CD8-positive, alpha-beta T cell (primary cell): ENCODE measurements at regions of chr19 and their contacts with region 1.

Region 1: DNA sequence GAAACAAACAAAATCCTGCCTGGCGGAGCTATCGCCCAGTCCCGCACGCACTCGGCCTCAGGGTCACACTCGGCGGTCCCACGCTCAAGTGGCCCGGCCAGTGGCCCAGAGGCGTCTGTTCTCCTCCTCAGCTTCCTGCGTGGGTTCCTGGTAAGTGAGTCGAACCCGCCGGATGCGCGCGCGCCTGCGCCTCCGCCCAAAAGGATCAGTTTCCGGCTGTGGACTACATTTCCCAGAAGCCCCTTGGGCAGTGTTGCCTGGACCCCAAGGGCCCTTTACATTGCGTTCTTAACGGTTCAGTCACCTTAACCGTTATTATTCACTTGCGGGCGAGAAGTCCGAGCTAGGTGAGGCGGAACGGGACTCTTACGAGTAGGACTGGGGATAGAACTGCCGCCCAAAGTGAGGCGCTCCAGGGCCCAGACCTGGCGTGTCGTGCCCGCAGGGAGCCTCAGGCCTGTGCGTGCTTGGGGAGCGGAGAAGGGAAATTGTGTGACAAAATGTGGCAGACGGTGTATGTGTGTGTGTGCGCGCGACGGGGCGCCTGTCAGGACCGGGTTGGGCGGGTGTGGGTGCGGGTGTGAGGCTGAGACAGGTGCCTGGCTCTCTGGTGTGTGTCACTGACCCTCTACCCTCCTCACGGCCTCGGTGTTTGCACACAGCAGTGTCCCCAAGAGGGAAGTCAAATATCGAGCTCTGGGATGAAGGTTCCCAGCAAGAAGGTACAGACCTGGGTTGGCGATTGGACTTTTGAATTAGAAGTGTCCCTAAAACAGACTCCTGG is at the start of gene ZNF546:
- DNase-seq: peak; percentile 70 to 94 (median 90)
- ATAC-seq: peak; percentile 88
- H3K4me3 ChIP-seq: peak within 1 kb of the TSS; percentile 80 to 85
- H3K4me3 Mint-ChIP-seq: peak within 1 kb of the TSS; percentile 90
- H3K27ac ChIP-seq: peak within 1 kb of the TSS; percentile 77 to 88
- H3K27ac Mint-ChIP-seq: peak within 1 kb of the TSS; percentile 92
- H3K4me1 ChIP-seq: peaks cover 15% of the 10 kb centered on the region
- H3K4me1 Mint-ChIP-seq: peaks cover 41% of the 10 kb centered on the region
- H3K27me3 ChIP-seq: no peaks in the 10 kb centered on the region
- H3K27me3 Mint-ChIP-seq: no peaks in the 10 kb centered on the region
- CTCF ChIP-seq: no peak
- total RNA-seq, gene ZNF546: 1.6 to 2.4 TPM

Region 2: GRCh38 chr19:39824143-39825092 is 172.6 kb before region 1 on chr19:
- CTCF ChIA-PET with region 1: no interaction called
- POLR2A ChIA-PET with region 1: no interaction called
- intact Hi-C with region 1: loop called in 1 of 2 experiments (anchors 1 kb)
- DNase-seq: peak; percentile 72 to 94 (median 87)
- ATAC-seq: peak; percentile 98
- H3K4me3 ChIP-seq: peak overlapping the region; percentile 72 to 79
- H3K4me3 Mint-ChIP-seq: no peak overlapping the region
- H3K27ac ChIP-seq: peak overlapping the region; percentile 43 to 45
- H3K27ac Mint-ChIP-seq: no peak overlapping the region
- H3K4me1 ChIP-seq: peaks cover 27% of the 10 kb centered on the region
- H3K4me1 Mint-ChIP-seq: peaks cover 17% of the 10 kb centered on the region
- H3K27me3 ChIP-seq: no peaks in the 10 kb centered on the region
- H3K27me3 Mint-ChIP-seq: no peaks in the 10 kb centered on the region
- CTCF ChIP-seq: no peak

Region 3: GRCh38 chr19:39833464-39834286 is 163.3 kb before region 1 on chr19 and contains the start of gene DYRK1B:
- CTCF ChIA-PET with region 1: no interaction called
- POLR2A ChIA-PET with region 1: no interaction called
- intact Hi-C with region 1: loop called in 1 of 2 experiments (anchors 5 kb)
- DNase-seq: peak; percentile 97 to 99 (median 98)
- ATAC-seq: peak; percentile 84
- H3K4me3 ChIP-seq: peak within 1 kb of the TSS; percentile 93 to 99
- H3K4me3 Mint-ChIP-seq: peak within 1 kb of the TSS; percentile 75
- H3K27ac ChIP-seq: peak within 1 kb of the TSS; percentile 96 to 99
- H3K27ac Mint-ChIP-seq: peak within 1 kb of the TSS; percentile 90
- H3K4me1 ChIP-seq: peaks cover 23% of the 10 kb centered on the region
- H3K4me1 Mint-ChIP-seq: peaks cover 28% of the 10 kb centered on the region
- H3K27me3 ChIP-seq: no peaks in the 10 kb centered on the region
- H3K27me3 Mint-ChIP-seq: no peaks in the 10 kb centered on the region
- CTCF ChIP-seq: no peak
- total RNA-seq, gene DYRK1B: 19.0 to 22.6 TPM

Region 4: DNA sequence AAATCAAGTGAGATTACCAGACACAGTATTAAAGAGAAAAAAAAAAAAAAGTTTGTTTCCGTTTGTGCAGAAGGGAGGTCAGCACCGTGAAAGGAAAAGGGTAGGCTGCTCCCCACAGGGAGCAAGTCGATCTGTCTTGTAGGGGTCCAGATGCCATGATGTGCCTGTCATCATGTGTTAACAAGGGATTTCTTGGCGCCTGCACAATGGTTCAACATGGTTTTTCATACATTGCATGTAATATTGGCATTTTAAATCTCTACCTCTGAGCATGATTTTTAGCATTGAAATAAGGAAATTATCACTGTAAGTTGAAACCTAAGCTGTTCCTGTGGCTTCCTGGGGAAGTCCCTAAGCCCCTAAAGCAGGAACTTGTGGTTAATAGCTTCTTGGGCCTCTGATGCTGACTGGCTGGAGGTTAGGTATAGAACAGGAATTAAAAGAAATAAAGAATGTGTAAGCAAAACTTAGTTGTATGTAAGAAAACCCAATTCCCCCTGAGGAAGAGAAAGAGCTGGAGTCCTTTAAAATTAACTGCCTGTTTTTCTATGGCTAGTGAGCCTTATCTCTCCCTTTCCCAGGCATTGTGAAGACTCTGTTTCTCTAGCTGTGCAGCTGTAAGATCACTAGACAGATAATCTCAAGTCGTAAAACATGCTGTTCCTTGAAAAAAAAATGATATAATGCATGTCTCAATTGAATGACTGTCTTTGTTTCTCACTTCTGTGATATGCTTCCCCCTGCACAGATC is 55.2 kb before region 1 on chr19:
- CTCF ChIA-PET with region 1: interaction called, 3 read pairs
- POLR2A ChIA-PET with region 1: no interaction called
- intact Hi-C with region 1: loop called in 1 of 2 experiments (anchors 1 kb)
- DNase-seq: peak in 8 of 9 experiments; percentile 28 to 93 (median 62)
- ATAC-seq: peak; percentile 79
- H3K4me3 ChIP-seq: peak overlapping the region; percentile 34 to 37
- H3K4me3 Mint-ChIP-seq: peak overlapping the region; percentile 57
- H3K27ac ChIP-seq: peak overlapping the region; percentile 36 to 93
- H3K27ac Mint-ChIP-seq: peak overlapping the region; percentile 80
- H3K4me1 ChIP-seq: peaks cover 71% of the 10 kb centered on the region
- H3K4me1 Mint-ChIP-seq: peaks cover 73% of the 10 kb centered on the region
- H3K27me3 ChIP-seq: no peaks in the 10 kb centered on the region
- H3K27me3 Mint-ChIP-seq: no peaks in the 10 kb centered on the region
- CTCF ChIP-seq: no peak

Region 5: GRCh38 chr19:39963898-39964297 is 33.1 kb before region 1 on chr19:
- CTCF ChIA-PET with region 1: no interaction called
- POLR2A ChIA-PET with region 1: no interaction called
- intact Hi-C with region 1: no loop called
- DNase-seq: no peak
- ATAC-seq: no peak
- H3K4me3 ChIP-seq: no peak overlapping the region
- H3K4me3 Mint-ChIP-seq: no peak overlapping the region
- H3K27ac ChIP-seq: no peak overlapping the region
- H3K27ac Mint-ChIP-seq: peak overlapping the region; percentile 3
- H3K4me1 ChIP-seq: peaks cover 18% of the 10 kb centered on the region
- H3K4me1 Mint-ChIP-seq: peaks cover 35% of the 10 kb centered on the region
- H3K27me3 ChIP-seq: no peaks in the 10 kb centered on the region
- H3K27me3 Mint-ChIP-seq: no peaks in the 10 kb centered on the region
- CTCF ChIP-seq: no peak

Region 6: GRCh38 chr19:40055832-40056504 is 59.0 kb after region 1 on chr19 and contains the start of gene ZNF780B:
- CTCF ChIA-PET with region 1: no interaction called
- POLR2A ChIA-PET with region 1: no interaction called
- intact Hi-C with region 1: loop called (anchors 1 kb)
- DNase-seq: peak; percentile 29 to 82 (median 69)
- ATAC-seq: peak; percentile 90
- H3K4me3 ChIP-seq: peak within 1 kb of the TSS; percentile 72 to 83
- H3K4me3 Mint-ChIP-seq: peak within 1 kb of the TSS; percentile 100
- H3K27ac ChIP-seq: peak within 1 kb of the TSS; percentile 78
- H3K27ac Mint-ChIP-seq: peak within 1 kb of the TSS; percentile 99
- H3K4me1 ChIP-seq: peaks cover 21% of the 10 kb centered on the region
- H3K4me1 Mint-ChIP-seq: peaks cover 58% of the 10 kb centered on the region
- H3K27me3 ChIP-seq: no peaks in the 10 kb centered on the region
- H3K27me3 Mint-ChIP-seq: peaks cover 8% of the 10 kb centered on the region
- CTCF ChIP-seq: no peak
- total RNA-seq, gene ZNF780B: 9.8 to 14.8 TPM

Region 7: GRCh38 chr19:40090241-40091204 is 93.5 kb after region 1 on chr19 and contains the start of gene ZNF780A:
- CTCF ChIA-PET with region 1: no interaction called
- POLR2A ChIA-PET with region 1: interaction called, 4 read pairs
- intact Hi-C with region 1: loop called (anchors 1 kb)
- DNase-seq: peak; percentile 55 to 87 (median 79)
- ATAC-seq: peak; percentile 94
- H3K4me3 ChIP-seq: peak within 1 kb of the TSS; percentile 83 to 99
- H3K4me3 Mint-ChIP-seq: peak within 1 kb of the TSS; percentile 100
- H3K27ac ChIP-seq: peak within 1 kb of the TSS; percentile 93 to 98
- H3K27ac Mint-ChIP-seq: peak within 1 kb of the TSS; percentile 100
- H3K4me1 ChIP-seq: peaks cover 24% of the 10 kb centered on the region
- H3K4me1 Mint-ChIP-seq: peaks cover 48% of the 10 kb centered on the region
- H3K27me3 ChIP-seq: peaks cover 0 to 4% of the 10 kb centered on the region in 2 experiments
- H3K27me3 Mint-ChIP-seq: peaks cover 7% of the 10 kb centered on the region
- CTCF ChIP-seq: no peak
- total RNA-seq, gene ZNF780A: 10.6 to 11.6 TPM

Region 8: DNA sequence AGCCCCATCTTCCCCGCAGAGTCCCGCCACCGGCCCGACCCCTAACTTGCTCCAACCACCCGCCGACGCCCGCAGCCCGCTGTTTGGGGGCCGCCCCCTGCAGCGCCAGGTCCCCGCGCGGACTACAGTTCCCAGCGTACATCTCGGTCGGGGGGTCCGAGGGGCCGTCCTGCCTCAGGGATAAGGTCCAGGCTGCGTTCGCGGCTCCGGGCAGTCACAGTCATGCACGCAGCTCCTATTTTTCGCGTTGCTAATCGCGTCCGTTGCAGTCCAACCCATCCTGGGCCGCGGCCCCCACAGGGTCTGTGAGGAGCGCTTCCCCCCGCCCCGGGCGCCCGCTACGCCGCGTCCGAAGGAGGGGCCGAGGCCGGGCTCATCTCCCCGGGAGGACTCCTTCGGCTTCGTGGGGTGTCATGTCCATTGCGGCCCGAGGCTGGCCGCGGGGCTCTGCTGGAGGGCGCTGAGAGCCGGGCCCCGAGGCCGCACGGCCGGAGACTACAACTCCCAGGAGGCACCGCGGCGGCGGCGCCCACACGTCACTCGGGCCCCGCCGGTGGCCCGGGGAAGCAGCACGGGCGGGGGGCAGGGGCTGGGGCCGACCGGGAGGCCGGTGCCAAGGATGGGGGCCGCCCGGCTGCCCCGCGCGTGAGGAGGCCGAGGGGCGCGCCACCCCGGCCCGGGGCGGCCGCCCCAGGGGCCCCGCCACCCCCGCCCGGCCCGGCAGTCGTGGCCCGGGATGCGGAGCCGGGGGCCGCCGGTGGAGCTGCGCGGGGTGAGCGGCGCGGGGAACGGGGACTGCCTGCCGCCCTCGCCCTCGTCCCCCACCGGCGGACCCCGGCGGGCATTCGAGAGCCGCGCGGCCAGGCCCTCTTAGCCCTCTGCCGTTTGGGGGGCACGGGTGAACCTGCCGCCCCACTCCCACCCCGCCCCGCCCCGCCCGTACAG is 194.2 kb after region 1 on chr19 and contains the start of gene MAP3K10:
- CTCF ChIA-PET with region 1: no interaction called
- POLR2A ChIA-PET with region 1: no interaction called
- intact Hi-C with region 1: loop called (anchors 2 kb)
- DNase-seq: peak; percentile 41 to 86 (median 70)
- ATAC-seq: peak; percentile 79
- H3K4me3 ChIP-seq: peak within 1 kb of the TSS; percentile 82 to 100
- H3K4me3 Mint-ChIP-seq: peak within 1 kb of the TSS; percentile 91
- H3K27ac ChIP-seq: peak within 1 kb of the TSS; percentile 81 to 90
- H3K27ac Mint-ChIP-seq: peak within 1 kb of the TSS; percentile 91
- H3K4me1 ChIP-seq: peaks cover 16% of the 10 kb centered on the region
- H3K4me1 Mint-ChIP-seq: peaks cover 34% of the 10 kb centered on the region
- H3K27me3 ChIP-seq: no peaks in the 10 kb centered on the region
- H3K27me3 Mint-ChIP-seq: no peaks in the 10 kb centered on the region
- CTCF ChIP-seq: no peak
- total RNA-seq, gene MAP3K10: 26.4 to 27.7 TPM